IMR-90 (cell line): ENCODE measurements at regions of chr19 and their contacts with region 1.

Region 1: GRCh38 chr19:16417660-16418596 is 53.8 kb downstream of the EPS15L1 start:
- DNase-seq: peak; percentile 42
- ATAC-seq: peak; percentile 94
- H3K4me3 ChIP-seq: no peak overlapping the region
- H3K27ac ChIP-seq: no peak overlapping the region
- H3K4me1 ChIP-seq: 0 out of 2 replicates have a peak, but pooled peaks cover 1% of the 10 kb centered on the region
- H3K27me3 ChIP-seq: no peaks in the 10 kb centered on the region
- CTCF ChIP-seq: peak; percentile 72
- POLR2A ChIP-seq: no peak
- RAD21 ChIP-seq: peak; percentile 73

Region 2: DNA sequence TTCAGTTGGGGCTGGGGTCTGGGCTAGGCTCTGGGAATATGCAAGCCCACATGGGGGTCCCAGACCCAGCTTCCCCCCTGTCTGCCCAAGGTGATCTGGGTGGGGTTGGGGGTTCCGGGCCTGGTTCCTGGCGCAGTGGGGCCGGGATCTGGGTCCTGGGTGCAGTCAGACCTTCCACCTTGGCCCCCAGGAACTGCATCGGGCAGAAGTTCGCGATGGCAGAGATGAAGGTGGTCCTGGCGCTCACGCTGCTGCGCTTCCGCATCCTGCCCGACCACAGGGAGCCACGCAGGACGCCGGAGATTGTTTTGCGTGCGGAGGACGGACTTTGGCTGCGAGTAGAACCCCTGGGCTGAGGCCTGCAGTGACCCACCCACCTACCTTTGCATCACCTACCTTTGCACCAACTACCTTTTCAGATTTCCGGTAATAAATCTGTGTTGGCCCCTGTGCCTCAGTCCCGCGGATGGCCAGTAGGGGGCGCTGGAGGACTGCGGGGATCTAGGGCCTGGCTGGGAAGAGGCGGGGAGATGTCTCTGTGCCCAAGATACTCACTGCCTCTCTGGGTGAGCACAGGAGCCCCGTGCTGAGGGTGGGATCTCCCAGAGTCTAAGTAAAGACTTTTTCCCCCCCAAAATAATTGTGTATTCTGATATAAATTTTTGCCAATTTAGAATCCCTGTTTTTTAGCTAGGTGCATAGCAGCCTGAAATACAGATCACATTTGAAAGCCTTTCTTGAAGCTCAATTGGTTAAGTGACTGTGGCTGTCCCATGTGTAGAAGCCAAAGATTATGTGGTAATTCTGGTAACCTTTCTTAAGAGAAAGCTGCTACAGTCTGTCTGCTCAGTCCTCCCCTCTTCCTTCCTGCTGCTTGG is 788.7 kb before region 1 on chr19:
- CTCF ChIA-PET with region 1: no interaction called
- POLR2A ChIA-PET with region 1: no interaction called
- dilution Hi-C with region 1: no loop called
- in situ Hi-C with region 1: loop called (anchors 25 kb)
- intact Hi-C with region 1: no loop called
- DNase-seq: peak; percentile 19
- ATAC-seq: peak; percentile 92
- H3K4me3 ChIP-seq: no peak overlapping the region
- H3K27ac ChIP-seq: no peak overlapping the region
- H3K4me1 ChIP-seq: no peaks in the 10 kb centered on the region
- H3K27me3 ChIP-seq: no peaks in the 10 kb centered on the region
- CTCF ChIP-seq: peak; percentile 73
- POLR2A ChIP-seq: no peak
- RAD21 ChIP-seq: peak; percentile 75

Region 3: DNA sequence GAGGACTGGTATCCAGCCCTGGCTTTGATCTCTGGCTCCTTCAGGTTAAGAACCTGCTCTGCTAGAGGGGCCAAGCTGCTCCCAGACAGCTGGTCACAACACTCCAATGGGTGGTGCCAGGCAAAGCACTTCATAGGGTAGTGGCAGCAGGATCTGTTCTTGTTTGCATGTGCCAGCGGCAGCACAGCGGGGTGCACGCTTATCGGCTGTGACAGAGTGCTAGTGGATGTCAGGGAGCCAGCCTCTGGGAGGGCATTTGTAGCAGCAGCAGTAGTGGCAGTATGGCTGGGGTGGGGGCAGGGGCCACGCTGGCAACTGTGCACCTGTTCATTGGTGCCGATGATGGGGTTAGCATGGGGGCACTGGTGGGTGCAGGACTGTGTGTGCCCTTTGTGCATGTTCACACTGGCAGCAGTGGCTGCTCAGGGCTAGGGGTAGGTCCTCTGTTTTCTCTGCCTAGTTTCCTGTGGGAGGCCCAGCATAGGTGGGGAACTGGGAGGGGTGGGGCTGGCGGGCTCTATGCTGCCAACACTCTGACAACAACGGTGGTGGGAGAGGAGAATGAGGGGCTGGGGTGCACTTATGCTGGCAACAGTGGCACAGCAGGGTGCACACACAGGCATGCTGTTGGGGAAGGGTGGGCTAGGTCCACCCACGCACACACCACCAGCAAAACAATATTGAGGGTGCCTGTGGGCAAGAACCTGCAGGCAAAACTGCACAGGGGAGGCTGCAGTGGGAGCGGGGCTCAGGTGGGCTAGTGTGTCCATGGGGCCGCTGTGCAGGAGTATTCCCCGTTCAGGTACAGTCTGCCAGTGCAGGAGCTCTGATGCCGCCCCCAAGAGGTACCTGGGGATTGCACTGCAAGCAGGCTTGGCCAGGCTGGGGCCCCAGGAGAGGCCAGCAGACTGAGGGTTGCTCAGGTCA is 200.9 kb before region 1 on chr19:
- CTCF ChIA-PET with region 1: no interaction called
- POLR2A ChIA-PET with region 1: no interaction called
- dilution Hi-C with region 1: no loop called
- in situ Hi-C with region 1: no loop called
- intact Hi-C with region 1: no loop called
- DNase-seq: no peak
- ATAC-seq: no peak
- H3K4me3 ChIP-seq: no peak overlapping the region
- H3K27ac ChIP-seq: no peak overlapping the region
- H3K4me1 ChIP-seq: no peaks in the 10 kb centered on the region
- H3K27me3 ChIP-seq: no peaks in the 10 kb centered on the region
- CTCF ChIP-seq: no peak
- POLR2A ChIP-seq: no peak
- RAD21 ChIP-seq: no peak

Region 4: DNA sequence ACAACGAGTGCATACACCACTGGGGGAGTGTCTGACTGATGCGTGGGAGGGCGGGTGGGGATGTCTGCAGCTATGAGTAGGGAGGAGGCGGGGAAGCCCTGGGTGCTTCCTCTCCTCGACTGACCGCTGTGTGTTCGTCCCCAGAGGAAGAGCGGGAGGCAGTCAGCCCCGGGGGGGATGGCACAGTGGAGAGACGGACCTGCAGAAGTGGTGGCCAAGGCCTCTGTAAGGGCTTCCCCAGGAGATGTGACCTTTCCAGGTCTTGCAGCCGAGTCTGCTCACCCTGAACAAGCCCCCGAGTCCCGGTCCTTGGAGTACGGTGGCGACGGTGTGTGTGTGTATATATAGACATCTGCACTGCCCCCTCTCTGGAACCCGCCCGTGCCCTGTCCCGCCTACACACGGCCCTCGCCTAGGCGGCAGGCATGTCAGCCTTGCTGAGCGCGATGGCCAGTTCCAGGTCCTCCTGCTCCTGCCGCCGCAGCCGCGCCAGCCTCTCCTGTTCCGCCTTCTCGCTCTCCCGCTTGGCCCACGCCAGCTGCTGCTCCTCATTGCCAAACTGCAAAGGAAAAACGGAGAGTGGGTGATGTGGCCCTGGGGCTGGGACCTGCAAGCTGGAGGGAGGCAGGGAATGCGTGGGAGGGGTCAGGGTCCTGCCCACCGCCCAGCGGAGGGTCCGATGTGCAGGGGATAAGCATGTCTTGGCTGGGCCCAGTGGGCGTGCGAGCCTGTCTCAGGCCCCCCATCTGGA is 62.5 kb before region 1 on chr19:
- CTCF ChIA-PET with region 1: no interaction called
- POLR2A ChIA-PET with region 1: no interaction called
- dilution Hi-C with region 1: no loop called
- in situ Hi-C with region 1: no loop called
- intact Hi-C with region 1: no loop called
- DNase-seq: no peak
- ATAC-seq: no peak
- H3K4me3 ChIP-seq: no peak overlapping the region
- H3K27ac ChIP-seq: no peak overlapping the region
- H3K4me1 ChIP-seq: no peaks in the 10 kb centered on the region
- H3K27me3 ChIP-seq: no peaks in the 10 kb centered on the region
- CTCF ChIP-seq: no peak
- POLR2A ChIP-seq: no peak
- RAD21 ChIP-seq: no peak

Region 5: GRCh38 chr19:16509141-16510061 is 91.5 kb after region 1 on chr19:
- CTCF ChIA-PET with region 1: no interaction called
- POLR2A ChIA-PET with region 1: no interaction called
- dilution Hi-C with region 1: no loop called
- in situ Hi-C with region 1: no loop called
- intact Hi-C with region 1: no loop called
- DNase-seq: peak; percentile 36
- ATAC-seq: peak; percentile 29
- H3K4me3 ChIP-seq: no peak overlapping the region
- H3K27ac ChIP-seq: peak overlapping the region; percentile 4; the same call in 1 of the 2 replicates
- H3K4me1 ChIP-seq: peaks cover 5% of the 10 kb centered on the region; the same call in 1 of the 2 replicates
- H3K27me3 ChIP-seq: no peaks in the 10 kb centered on the region
- CTCF ChIP-seq: no peak
- POLR2A ChIP-seq: no peak
- RAD21 ChIP-seq: no peak

Region 6: DNA sequence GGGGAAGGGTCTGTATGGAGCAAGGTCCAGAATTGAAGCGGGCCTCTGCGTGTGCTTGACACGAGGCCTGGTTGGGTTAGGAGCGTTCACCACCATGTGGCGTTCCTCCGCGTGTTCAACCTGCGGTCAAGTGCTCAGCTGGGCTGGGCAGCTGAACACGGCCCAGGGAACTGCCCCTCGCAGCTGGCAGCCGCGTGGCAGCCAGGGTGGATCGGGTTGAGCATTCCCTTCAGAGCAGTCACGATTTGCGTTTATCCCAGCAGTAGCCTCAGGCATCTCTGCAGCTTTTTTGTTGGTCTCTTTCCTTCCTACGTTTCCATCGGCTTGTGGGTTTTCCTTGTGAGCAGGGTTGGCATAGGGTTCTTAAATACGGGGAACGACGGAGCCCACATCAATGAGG is 442.2 kb after region 1 on chr19:
- CTCF ChIA-PET with region 1: no interaction called
- POLR2A ChIA-PET with region 1: no interaction called
- dilution Hi-C with region 1: no loop called
- in situ Hi-C with region 1: no loop called
- intact Hi-C with region 1: no loop called
- DNase-seq: no peak
- ATAC-seq: no peak
- H3K4me3 ChIP-seq: no peak overlapping the region
- H3K27ac ChIP-seq: no peak overlapping the region
- H3K4me1 ChIP-seq: peaks cover 2% of the 10 kb centered on the region; the same call in 1 of the 2 replicates
- H3K27me3 ChIP-seq: no peaks in the 10 kb centered on the region
- CTCF ChIP-seq: no peak
- POLR2A ChIP-seq: no peak
- RAD21 ChIP-seq: no peak